Transverse colon (tissue), 4 donors: ENCODE measurements at regions of chr10 and their contacts with region 1.

Region 1: GRCh38 chr10:105025092-105025491 is 384.0 kb downstream of the SORCS3 start:
- DNase-seq: no peak
- H3K4me3 ChIP-seq: no peak overlapping the region
- H3K27ac ChIP-seq: no peak overlapping the region
- H3K4me1 ChIP-seq: no peaks in the 10 kb centered on the region
- H3K27me3 ChIP-seq: no peaks in the 10 kb centered on the region
- CTCF ChIP-seq: no peak
- EP300 ChIP-seq: no peak
- POLR2A ChIP-seq: no peak

Region 2: GRCh38 chr10:105056413-105056812 is 31.3 kb after region 1 on chr10:
- in situ Hi-C with region 1: no loop called
- intact Hi-C with region 1: loop called (anchors 1 kb)
- DNase-seq: no peak
- H3K4me3 ChIP-seq: no peak overlapping the region
- H3K27ac ChIP-seq: no peak overlapping the region
- H3K4me1 ChIP-seq: no peaks in the 10 kb centered on the region
- H3K27me3 ChIP-seq: no peaks in the 10 kb centered on the region
- CTCF ChIP-seq: no peak
- EP300 ChIP-seq: no peak
- POLR2A ChIP-seq: no peak